ENCODE measurements at regions of chr17 and their contacts with region 1.

Region 1: GRCh38 chr17:78588258-78589030 is 11.2 kb upstream of the DNAH17 start:
- DNase-seq: peak; percentile 54
- ATAC-seq: peak; percentile 73
- H3K4me3 ChIP-seq: peak overlapping the region; percentile 14 to 61 (median 40); a peak in 5 of 6 replicates
- H3K27ac ChIP-seq: peak overlapping the region; percentile 19
- H3K4me1 ChIP-seq: peaks cover 86% of the 10 kb centered on the region
- H3K27me3 ChIP-seq: no peaks in the 10 kb centered on the region
- CTCF ChIP-seq: no peak; the same call in none of the 2 replicates
- EP300 ChIP-seq: no peak; a peak in 1 of 4 replicates
- POLR2A ChIP-seq: peak in 1 of 2 experiments; percentile 27; a peak in 1 of 4 replicates
- RAD21 ChIP-seq: peak; percentile 31

Region 2: DNA sequence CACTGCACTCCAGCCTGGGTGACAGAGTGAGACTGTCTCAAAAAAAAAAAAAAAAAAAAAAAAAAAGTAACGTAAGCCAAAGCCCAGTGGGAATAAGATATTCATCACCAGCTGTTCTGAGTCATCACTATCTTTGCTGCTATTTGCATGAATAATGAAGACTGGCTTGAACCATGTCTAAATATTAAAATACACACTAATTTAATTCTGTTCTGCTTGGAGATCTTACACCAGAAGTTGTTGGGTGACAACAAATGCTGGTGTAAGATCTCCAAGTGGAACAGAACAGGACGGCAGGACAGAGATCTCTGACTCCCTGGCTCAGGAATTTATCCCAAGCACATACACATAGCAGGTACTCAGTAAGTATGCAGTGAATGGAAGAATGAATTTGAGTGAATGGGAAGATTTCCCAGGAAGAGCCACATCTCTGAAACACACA is 30.8 kb before region 1 on chr17:
- CTCF ChIA-PET with region 1: no interaction called
- POLR2A ChIA-PET with region 1: interaction called, 3 read pairs
- in situ Hi-C with region 1: no loop called
- intact Hi-C with region 1: loop called (anchors 5 kb)
- DNase-seq: no peak
- ATAC-seq: peak; percentile 36
- H3K4me3 ChIP-seq: peak overlapping the region in 1 of 3 experiments; percentile 14; a peak in 1 of 6 replicates
- H3K27ac ChIP-seq: peak overlapping the region; percentile 31
- H3K4me1 ChIP-seq: peaks cover 32% of the 10 kb centered on the region
- H3K27me3 ChIP-seq: no peaks in the 10 kb centered on the region; a peak in 1 of 5 replicates
- CTCF ChIP-seq: no peak
- EP300 ChIP-seq: no peak
- POLR2A ChIP-seq: no peak
- RAD21 ChIP-seq: no peak

Region 3: DNA sequence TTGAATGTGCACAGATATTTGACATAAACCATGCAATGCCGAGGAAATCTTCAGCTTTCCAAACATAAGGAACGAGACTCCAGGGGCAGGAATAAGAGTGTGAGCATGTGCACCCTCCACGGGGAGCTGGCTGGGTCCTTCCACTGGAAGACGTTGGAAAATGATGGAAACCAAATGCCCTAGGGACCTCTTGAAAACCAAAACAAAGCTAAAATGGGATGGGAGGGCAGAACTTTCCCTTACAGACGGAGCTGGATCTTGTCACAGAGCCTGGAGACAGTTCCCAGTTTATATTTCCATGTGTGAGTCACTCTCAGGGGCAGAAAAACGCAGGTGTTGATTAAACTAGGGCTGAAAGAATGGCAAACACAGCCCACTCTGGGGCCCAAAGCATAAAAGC is 23.2 kb after region 1 on chr17:
- CTCF ChIA-PET with region 1: no interaction called
- POLR2A ChIA-PET with region 1: interaction called, 16 read pairs
- in situ Hi-C with region 1: no loop called
- intact Hi-C with region 1: no loop called
- DNase-seq: no peak
- ATAC-seq: no peak
- H3K4me3 ChIP-seq: no peak overlapping the region
- H3K27ac ChIP-seq: no peak overlapping the region
- H3K4me1 ChIP-seq: peaks cover 17% of the 10 kb centered on the region
- H3K27me3 ChIP-seq: peaks cover 0 to 9% of the 10 kb centered on the region in 2 experiments; a peak in 1 of 5 replicates
- CTCF ChIP-seq: no peak
- EP300 ChIP-seq: no peak
- POLR2A ChIP-seq: no peak
- RAD21 ChIP-seq: no peak

Region 4: GRCh38 chr17:78708510-78708973 is 120.1 kb after region 1 on chr17:
- CTCF ChIA-PET with region 1: interaction called, 4 read pairs
- POLR2A ChIA-PET with region 1: no interaction called
- in situ Hi-C with region 1: no loop called
- intact Hi-C with region 1: loop called (anchors 1 kb)
- DNase-seq: peak; percentile 85
- ATAC-seq: peak; percentile 99
- H3K4me3 ChIP-seq: no peak overlapping the region
- H3K27ac ChIP-seq: no peak overlapping the region
- H3K4me1 ChIP-seq: peaks cover 10% of the 10 kb centered on the region
- H3K27me3 ChIP-seq: no peaks in the 10 kb centered on the region
- CTCF ChIP-seq: peak; percentile 99
- EP300 ChIP-seq: peak; percentile 30 to 35; a peak in 1 of 4 replicates
- POLR2A ChIP-seq: no peak
- RAD21 ChIP-seq: peak; percentile 98

Region 5: DNA sequence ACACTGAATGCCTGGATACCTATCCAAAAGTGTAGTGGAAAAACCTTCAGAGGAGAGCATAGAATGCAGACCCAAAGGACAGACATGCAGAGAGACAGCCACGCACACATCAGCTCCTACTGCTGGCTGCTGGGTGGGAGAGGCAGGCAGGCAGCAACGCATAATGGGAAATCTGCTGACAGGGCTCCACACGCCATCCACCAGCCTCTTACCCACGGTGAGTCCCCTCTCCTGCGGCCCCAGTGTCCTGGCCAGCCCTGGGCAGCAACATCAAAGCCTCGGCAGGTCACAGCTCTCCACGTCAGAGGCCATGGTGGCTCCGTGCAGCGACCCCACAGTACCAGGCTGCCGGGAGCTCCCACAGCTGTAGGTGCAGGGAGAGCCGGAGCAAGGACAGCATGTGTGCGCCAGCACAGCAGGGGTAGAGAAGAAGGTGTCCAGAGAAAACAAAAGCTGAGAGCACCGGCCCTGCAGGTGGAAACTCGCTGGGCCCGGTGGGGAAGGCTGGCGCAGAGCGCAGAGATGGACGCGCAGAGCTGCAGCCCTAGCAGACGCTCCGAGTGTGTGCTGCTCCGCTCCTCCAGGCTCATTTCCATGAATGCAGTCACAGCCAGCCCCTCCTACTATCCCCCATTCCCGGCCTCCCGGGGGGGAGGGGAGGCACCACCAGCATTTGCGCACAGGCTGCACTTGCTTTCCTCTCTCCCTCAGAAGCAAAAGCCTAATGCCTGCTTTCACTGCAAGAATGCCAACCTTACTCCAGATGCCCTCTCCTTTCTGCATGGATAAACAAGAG is 134.8 kb after region 1 on chr17:
- CTCF ChIA-PET with region 1: no interaction called
- POLR2A ChIA-PET with region 1: no interaction called
- in situ Hi-C with region 1: no loop called
- intact Hi-C with region 1: no loop called
- DNase-seq: no peak
- ATAC-seq: peak; percentile 61
- H3K4me3 ChIP-seq: peak overlapping the region; percentile 31 to 64 (median 41); a peak in 5 of 6 replicates
- H3K27ac ChIP-seq: no peak overlapping the region
- H3K4me1 ChIP-seq: peaks cover 70% of the 10 kb centered on the region
- H3K27me3 ChIP-seq: no peaks in the 10 kb centered on the region
- CTCF ChIP-seq: no peak
- EP300 ChIP-seq: no peak
- POLR2A ChIP-seq: no peak
- RAD21 ChIP-seq: no peak

Measured in HepG2 (cell line).